ENCODE measurements at regions of chr16 and their contacts with region 1.

Region 1: DNA sequence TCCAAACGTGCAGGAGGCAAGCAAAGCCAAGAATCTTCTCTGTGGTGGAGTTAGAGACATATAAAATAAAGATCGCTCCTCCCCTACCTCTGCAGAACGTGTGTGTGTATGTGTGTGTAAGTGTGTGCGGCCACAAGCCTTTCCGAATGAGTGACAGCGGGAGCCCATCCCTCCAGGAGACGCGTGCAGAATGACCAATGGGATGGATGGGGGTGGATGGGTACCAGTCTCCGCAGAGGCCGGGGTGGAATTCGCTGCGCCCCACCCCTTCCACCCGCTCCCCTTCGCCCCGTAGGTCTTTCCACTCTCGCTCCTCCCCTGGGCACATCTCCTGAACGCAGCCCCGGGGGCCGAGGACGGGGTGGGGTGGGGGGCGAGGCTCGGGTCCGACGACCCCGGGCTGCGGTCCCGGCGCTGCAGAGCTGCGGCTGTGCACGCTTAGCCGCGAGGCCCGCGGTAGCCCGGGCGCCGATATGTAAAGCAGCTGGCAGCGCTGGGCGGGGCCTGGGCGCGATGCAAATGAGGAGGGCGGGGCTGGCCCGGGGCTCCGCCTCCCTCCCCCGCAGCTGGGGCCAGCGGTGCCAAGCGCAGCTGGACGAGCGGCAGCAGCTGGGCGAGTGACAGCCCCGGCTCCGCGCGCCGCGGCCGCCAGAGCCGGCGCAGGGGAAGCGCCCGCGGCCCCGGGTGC is at the start of gene PRKCB:
- DNase-seq: peak; percentile 89
- H3K4me3 ChIP-seq: peak within 1 kb of the TSS; percentile 46 to 63 (median 58)
- H3K27ac ChIP-seq: peak within 1 kb of the TSS; percentile 26 to 63 (median 57)
- H3K4me1 ChIP-seq: peaks cover 0 to 23% (median 11%) of the 10 kb centered on the region in 4 donors
- H3K27me3 ChIP-seq: peaks cover 28% of the 10 kb centered on the region
- CTCF ChIP-seq: no peak
- EP300 ChIP-seq: no peak
- POLR2A ChIP-seq: no peak
- total RNA-seq, gene PRKCB: 9.0 to 28.3 (median 15.2) TPM

Region 2: DNA sequence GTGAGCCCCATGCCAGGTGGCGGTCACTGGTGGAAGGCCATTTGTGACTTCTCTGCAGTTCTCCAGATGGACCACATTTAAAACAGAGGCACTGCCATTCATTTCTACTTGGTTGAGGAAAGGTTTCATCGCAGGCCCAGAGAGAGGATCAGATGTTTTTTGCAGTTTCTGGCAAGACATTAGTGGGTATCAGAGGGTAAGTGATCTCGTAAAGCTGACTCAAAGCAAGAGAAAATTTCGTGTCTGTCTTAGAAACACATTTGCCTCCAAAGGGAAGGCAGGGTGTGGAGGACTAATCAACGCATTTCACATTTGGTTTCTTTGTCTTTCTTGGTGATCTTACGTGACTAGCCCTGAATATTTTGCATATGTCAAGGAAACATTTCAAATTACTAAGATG is 82.1 kb after region 1 on chr16:
- in situ Hi-C with region 1: no loop called
- intact Hi-C with region 1: loop called (anchors 10 kb)
- DNase-seq: no peak
- H3K4me3 ChIP-seq: no peak overlapping the region
- H3K27ac ChIP-seq: no peak overlapping the region
- H3K4me1 ChIP-seq: no peaks in the 10 kb centered on the region
- H3K27me3 ChIP-seq: no peaks in the 10 kb centered on the region
- CTCF ChIP-seq: no peak
- EP300 ChIP-seq: no peak
- POLR2A ChIP-seq: no peak

Region 3: GRCh38 chr16:23949630-23950290 is 114.2 kb after region 1 on chr16:
- in situ Hi-C with region 1: no loop called
- intact Hi-C with region 1: loop called (anchors 10 kb)
- DNase-seq: peak; percentile 67
- H3K4me3 ChIP-seq: no peak overlapping the region
- H3K27ac ChIP-seq: peak overlapping the region; percentile 7 to 48 (median 33)
- H3K4me1 ChIP-seq: peaks cover 0 to 28% (median 4%) of the 10 kb centered on the region in 4 donors
- H3K27me3 ChIP-seq: no peaks in the 10 kb centered on the region
- CTCF ChIP-seq: no peak
- EP300 ChIP-seq: no peak
- POLR2A ChIP-seq: no peak

Measured in transverse colon (tissue), 4 donors.